Mammary epithelial cell (primary cell): ENCODE measurements at regions of chr2 and their contacts with region 1.

Region 1: GRCh38 chr2:232501331-232501771 is 13.7 kb upstream of the ECEL1 start:
- DNase-seq: no peak
- H3K4me3 ChIP-seq: no peak overlapping the region
- H3K27ac ChIP-seq: no peak overlapping the region
- H3K4me1 ChIP-seq: peaks cover 6% of the 10 kb centered on the region
- H3K27me3 ChIP-seq: peaks cover 24% of the 10 kb centered on the region
- CTCF ChIP-seq: no peak

Region 2: DNA sequence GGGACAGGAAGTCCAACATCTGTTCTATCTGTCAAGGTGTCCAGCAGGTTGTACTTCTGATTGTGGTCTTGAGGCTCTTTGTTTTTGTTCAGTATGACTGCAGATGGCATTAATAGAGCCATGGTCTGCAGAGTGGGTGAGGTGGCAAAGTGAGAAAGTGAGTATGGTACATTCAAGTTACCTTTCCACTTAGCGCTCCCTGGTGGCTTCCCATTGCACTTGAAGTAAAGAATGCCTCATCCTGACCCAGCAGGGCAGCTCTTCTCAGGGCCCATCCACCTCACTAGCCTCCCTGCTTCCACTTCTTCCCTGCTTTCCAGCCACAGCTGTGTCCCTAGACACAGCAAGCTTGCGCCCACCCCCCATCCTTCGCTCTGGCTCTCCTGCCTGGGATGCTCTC is 270.8 kb before region 1 on chr2:
- CTCF ChIA-PET with region 1: no interaction called
- dilution Hi-C with region 1: no loop called
- in situ Hi-C with region 1: no loop called
- intact Hi-C with region 1: no loop called
- DNase-seq: no peak
- H3K4me3 ChIP-seq: no peak overlapping the region
- H3K27ac ChIP-seq: no peak overlapping the region
- H3K4me1 ChIP-seq: peaks cover 1% of the 10 kb centered on the region
- H3K27me3 ChIP-seq: no peaks in the 10 kb centered on the region
- CTCF ChIP-seq: peak; percentile 22 to 33

Region 3: DNA sequence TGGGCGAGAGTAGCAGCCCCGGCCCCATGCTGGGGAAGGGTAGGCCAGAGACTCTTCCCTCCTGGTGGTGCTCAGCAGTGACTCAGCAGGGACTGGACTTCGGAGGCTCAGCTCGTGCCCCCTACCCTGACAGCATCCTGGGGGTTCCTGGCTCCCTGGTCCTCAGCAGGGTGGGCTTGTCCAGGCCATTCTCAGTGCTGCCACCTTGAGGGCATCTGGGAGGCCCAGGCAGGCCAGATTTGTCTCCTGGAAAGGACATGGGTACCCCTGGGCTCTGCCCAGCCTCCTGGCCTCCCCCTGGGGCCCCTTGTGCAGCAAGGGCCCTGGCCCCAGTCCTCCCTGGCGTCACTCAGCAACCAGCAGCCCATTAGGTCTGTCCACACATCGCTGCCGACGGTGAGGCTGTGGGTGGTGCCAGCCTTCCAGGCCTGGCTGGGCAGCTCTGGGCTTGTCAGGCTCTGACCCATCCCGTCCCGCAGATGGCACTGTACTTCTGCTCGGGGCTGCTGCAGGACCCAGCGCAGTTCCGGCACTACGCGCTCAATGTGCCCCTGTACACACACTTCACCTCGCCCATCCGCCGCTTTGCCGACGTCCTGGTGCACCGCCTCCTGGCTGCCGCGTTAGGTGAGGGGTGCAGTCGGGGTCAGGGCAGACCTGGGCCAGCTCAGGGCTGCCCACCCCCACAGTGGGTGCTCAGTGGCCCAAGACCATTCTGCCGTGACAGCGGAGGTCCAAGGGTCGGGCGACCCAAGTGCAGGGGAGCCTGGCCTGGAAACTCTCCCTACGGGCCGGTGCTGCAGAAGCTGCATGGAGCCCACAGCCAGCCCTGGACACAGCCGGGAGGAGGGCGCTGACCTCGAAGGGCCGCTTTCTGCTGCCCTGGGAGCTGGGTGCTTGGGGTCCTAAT is 167.7 kb before region 1 on chr2:
- CTCF ChIA-PET with region 1: no interaction called
- dilution Hi-C with region 1: no loop called
- in situ Hi-C with region 1: no loop called
- intact Hi-C with region 1: no loop called
- DNase-seq: peak; percentile 73
- H3K4me3 ChIP-seq: no peak overlapping the region
- H3K27ac ChIP-seq: no peak overlapping the region
- H3K4me1 ChIP-seq: peaks cover 16% of the 10 kb centered on the region
- H3K27me3 ChIP-seq: no peaks in the 10 kb centered on the region
- CTCF ChIP-seq: peak; percentile 29 to 56

Region 4: DNA sequence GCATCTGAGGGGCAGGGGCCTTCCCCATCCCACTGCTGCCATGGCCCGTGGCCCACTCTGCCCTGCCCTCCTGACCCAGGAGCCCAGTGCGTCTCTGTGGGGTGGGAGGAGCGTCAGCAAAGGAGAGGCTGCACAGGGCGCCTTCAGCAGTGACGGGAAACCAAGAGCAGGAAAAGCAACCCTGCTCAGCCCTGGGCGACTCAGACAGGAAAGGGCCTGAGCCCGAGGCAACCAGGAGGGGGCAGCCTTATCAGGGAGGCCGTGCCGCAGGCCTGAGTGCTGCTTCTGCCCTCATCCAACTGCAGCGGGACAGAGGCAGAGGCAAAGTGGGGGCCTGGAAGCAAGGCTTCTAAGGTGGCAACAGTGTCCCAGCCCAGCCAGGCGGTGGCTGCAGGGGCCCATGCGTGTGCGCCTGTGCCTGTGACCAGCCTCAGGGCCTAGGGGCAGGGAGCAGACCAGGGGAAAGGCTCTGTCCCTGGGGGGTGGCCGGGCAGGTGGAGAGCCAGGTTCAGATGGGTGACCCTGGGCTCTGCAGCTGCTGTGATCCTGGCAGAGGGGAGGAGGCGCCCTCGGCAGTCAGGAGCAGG is 68.7 kb before region 1 on chr2:
- CTCF ChIA-PET with region 1: no interaction called
- dilution Hi-C with region 1: no loop called
- in situ Hi-C with region 1: no loop called
- intact Hi-C with region 1: no loop called
- DNase-seq: no peak
- H3K4me3 ChIP-seq: no peak overlapping the region
- H3K27ac ChIP-seq: no peak overlapping the region
- H3K4me1 ChIP-seq: no peaks in the 10 kb centered on the region
- H3K27me3 ChIP-seq: no peaks in the 10 kb centered on the region
- CTCF ChIP-seq: no peak

Region 5: GRCh38 chr2:232463701-232464543 is 37.4 kb before region 1 on chr2:
- CTCF ChIA-PET with region 1: no interaction called
- dilution Hi-C with region 1: loop called (anchors 5 kb)
- in situ Hi-C with region 1: no loop called
- intact Hi-C with region 1: no loop called
- DNase-seq: no peak
- H3K4me3 ChIP-seq: no peak overlapping the region
- H3K27ac ChIP-seq: no peak overlapping the region
- H3K4me1 ChIP-seq: no peaks in the 10 kb centered on the region
- H3K27me3 ChIP-seq: peaks cover 4% of the 10 kb centered on the region
- CTCF ChIP-seq: no peak

Region 6: GRCh38 chr2:232473467-232473890 is 27.9 kb before region 1 on chr2:
- CTCF ChIA-PET with region 1: no interaction called
- dilution Hi-C with region 1: no loop called
- in situ Hi-C with region 1: no loop called
- intact Hi-C with region 1: loop called (anchors 2 kb)
- DNase-seq: no peak
- H3K4me3 ChIP-seq: no peak overlapping the region
- H3K27ac ChIP-seq: no peak overlapping the region
- H3K4me1 ChIP-seq: no peaks in the 10 kb centered on the region
- H3K27me3 ChIP-seq: peaks cover 8% of the 10 kb centered on the region
- CTCF ChIP-seq: no peak

Region 7: DNA sequence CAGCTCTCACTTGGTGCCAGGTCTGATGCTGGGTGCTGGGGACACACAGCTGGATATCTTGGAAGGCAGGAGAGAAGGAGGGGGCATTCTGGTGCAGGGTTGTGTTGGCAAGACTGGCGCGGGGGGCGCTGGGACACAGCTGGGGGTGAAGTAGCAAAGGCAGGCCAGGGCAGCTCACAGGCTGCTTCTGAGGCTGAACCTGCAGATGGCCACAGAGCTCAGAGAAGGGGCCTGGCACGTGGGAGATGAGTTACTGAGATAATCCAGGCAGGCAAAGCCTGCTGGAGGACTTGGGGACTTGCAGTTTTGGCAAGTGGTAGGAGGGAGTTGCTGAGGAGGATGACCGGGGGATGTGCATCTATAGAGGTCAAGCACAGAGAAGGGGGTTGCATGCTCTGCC is 836.7 kb after region 1 on chr2:
- CTCF ChIA-PET with region 1: no interaction called
- dilution Hi-C with region 1: no loop called
- in situ Hi-C with region 1: no loop called
- intact Hi-C with region 1: no loop called
- DNase-seq: no peak
- H3K4me3 ChIP-seq: no peak overlapping the region
- H3K27ac ChIP-seq: no peak overlapping the region
- H3K4me1 ChIP-seq: no peaks in the 10 kb centered on the region
- H3K27me3 ChIP-seq: peaks cover 2% of the 10 kb centered on the region
- CTCF ChIP-seq: no peak